Naive thymus-derived CD4-positive, alpha-beta T cell (primary cell): ENCODE measurements at regions of chr10 and their contacts with region 1.

Region 1: GRCh38 chr10:24642622-24643417 is 80.9 kb downstream of the ARHGAP21 start:
- DNase-seq: peak in 7 of 9 donors; percentile 24 to 64 (median 58)
- ATAC-seq: peak; percentile 93
- H3K4me3 ChIP-seq: no peak overlapping the region
- H3K4me3 Mint-ChIP-seq: no peak overlapping the region
- H3K27ac ChIP-seq: no peak overlapping the region
- H3K27ac Mint-ChIP-seq: no peak overlapping the region
- H3K4me1 ChIP-seq: no peaks in the 10 kb centered on the region
- H3K4me1 Mint-ChIP-seq: peaks cover 0 to 2% (median 0%) of the 10 kb centered on the region in 7 donors
- H3K27me3 ChIP-seq: no peaks in the 10 kb centered on the region
- H3K27me3 Mint-ChIP-seq: no peaks in the 10 kb centered on the region

Region 2: DNA sequence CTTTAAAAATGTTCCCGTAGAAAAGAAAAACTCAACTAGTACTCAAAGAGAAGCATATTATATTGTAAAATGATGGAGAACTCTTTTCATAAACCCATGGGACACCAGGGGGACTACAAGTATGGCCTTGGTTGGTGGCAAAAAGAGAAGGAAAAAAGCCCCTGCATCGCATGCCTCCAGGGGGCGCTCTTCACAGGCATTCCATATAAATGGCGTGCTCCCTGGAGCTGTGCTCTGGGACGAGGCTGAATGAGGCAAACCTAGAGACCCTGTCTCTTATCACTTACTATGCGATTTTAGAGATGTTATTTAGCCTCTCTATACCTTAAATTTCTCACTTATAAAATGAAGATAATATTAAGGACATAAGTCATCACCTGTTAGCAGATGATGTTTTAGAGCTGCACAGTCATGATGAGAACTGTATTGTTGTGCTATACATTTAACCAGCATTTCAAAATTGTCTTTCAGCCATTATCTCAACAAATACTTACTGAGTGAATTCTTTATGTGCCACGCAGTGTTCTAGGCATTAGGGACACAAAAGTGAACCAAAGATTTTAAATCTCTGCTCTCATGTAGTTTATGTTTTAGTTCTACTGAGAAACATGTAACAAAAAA is 24.9 kb before region 1 on chr10:
- CTCF ChIA-PET with region 1: interaction called, 12 read pairs
- POLR2A ChIA-PET with region 1: interaction called, 3 read pairs
- intact Hi-C with region 1: no loop called
- DNase-seq: peak; percentile 28 to 62 (median 46)
- ATAC-seq: peak; percentile 58
- H3K4me3 ChIP-seq: no peak overlapping the region
- H3K4me3 Mint-ChIP-seq: peak overlapping the region in 9 of 10 donors; percentile 34 to 75 (median 69)
- H3K27ac ChIP-seq: peak overlapping the region; percentile 5
- H3K27ac Mint-ChIP-seq: peak overlapping the region in 8 of 9 donors; percentile 65 to 97 (median 91)
- H3K4me1 ChIP-seq: peaks cover 0 to 16% of the 10 kb centered on the region in 2 donors
- H3K4me1 Mint-ChIP-seq: peaks cover 11 to 55% (median 42%) of the 10 kb centered on the region in 7 donors
- H3K27me3 ChIP-seq: no peaks in the 10 kb centered on the region
- H3K27me3 Mint-ChIP-seq: no peaks in the 10 kb centered on the region

Region 3: DNA sequence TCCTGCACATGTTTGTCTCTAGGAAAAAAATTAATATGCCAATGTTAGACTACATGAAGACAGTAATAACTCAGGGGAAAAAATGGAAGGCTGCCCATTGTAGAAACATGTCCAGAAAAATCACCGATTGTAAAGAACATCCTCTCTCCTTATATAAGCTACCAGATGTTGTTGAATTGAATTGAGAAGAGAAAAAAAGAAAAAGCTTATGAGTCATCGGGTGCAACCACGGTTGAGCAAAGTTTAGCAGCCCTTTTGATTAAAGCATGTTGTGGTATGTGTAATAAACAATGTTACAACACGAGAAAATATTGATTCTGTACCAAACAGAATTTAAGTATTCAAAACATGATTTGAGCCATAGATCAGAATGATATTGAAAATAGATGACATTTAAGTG is 183.2 kb after region 1 on chr10:
- CTCF ChIA-PET with region 1: no interaction called
- POLR2A ChIA-PET with region 1: no interaction called
- intact Hi-C with region 1: loop called in 1 of 2 experiments (anchors 10 kb)
- DNase-seq: no peak
- ATAC-seq: no peak
- H3K4me3 ChIP-seq: no peak overlapping the region
- H3K4me3 Mint-ChIP-seq: peak overlapping the region in 8 of 10 donors; percentile 11 to 62 (median 44)
- H3K27ac ChIP-seq: no peak overlapping the region
- H3K27ac Mint-ChIP-seq: peak overlapping the region in 6 of 9 donors; percentile 1 to 67 (median 36)
- H3K4me1 ChIP-seq: peaks cover 3 to 21% of the 10 kb centered on the region in 2 donors
- H3K4me1 Mint-ChIP-seq: peaks cover 14 to 54% (median 46%) of the 10 kb centered on the region in 7 donors
- H3K27me3 ChIP-seq: no peaks in the 10 kb centered on the region
- H3K27me3 Mint-ChIP-seq: no peaks in the 10 kb centered on the region

Region 4: GRCh38 chr10:24989867-24990266 is 347.0 kb after region 1 on chr10:
- CTCF ChIA-PET with region 1: interaction called, 10 read pairs
- POLR2A ChIA-PET with region 1: no interaction called
- intact Hi-C with region 1: loop called (anchors 1 kb)
- DNase-seq: peak in 1 of 9 donors; percentile 2
- ATAC-seq: no peak
- H3K4me3 ChIP-seq: no peak overlapping the region
- H3K4me3 Mint-ChIP-seq: no peak overlapping the region
- H3K27ac ChIP-seq: no peak overlapping the region
- H3K27ac Mint-ChIP-seq: no peak overlapping the region
- H3K4me1 ChIP-seq: no peaks in the 10 kb centered on the region
- H3K4me1 Mint-ChIP-seq: peaks cover 0 to 4% (median 0%) of the 10 kb centered on the region in 7 donors
- H3K27me3 ChIP-seq: no peaks in the 10 kb centered on the region
- H3K27me3 Mint-ChIP-seq: peaks cover 0 to 10% (median 0%) of the 10 kb centered on the region in 5 donors

Region 5: DNA sequence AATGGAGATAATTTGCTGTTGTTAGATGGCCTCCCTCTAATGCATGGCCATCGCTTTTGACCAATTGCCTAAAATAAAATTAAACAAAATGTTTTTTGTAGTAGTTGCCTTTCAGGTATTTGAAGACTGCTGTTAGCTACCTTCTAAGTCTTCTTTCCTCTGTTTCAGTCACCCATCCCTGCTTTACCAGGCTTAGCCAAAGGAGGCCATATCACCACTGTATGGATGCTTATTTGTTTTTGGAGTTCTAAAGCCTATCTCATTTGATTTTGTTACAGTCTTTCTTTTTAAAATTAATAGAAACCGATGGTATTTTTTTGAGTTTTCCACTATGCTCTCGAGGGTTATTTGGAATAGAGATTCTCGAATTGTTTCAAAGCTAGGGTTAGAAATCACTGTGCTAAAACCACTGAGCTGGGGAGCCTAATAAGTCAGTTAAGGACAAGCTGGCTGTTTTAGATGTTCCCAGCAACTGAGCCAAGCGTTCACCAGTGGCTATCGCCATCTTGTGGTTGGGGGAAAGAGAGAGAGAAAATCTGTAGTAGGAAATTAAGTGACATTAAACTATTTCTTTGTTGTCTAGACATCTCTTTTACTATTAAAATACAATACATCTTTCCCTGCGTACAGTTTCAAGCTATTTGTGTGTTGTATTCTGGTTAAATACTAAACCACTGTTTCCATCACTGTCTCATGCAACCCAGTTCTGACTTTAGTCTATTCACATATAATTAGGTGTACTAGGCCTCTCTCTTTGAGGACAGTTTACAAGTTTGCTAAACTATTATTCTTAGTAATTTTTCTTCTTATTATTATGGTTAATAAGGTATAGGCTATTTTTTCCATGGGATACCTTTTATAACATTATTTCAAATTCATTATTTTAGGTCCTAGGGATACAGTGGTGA is 584.2 kb after region 1 on chr10:
- CTCF ChIA-PET with region 1: no interaction called
- POLR2A ChIA-PET with region 1: no interaction called
- intact Hi-C with region 1: loop called in 1 of 2 experiments (anchors 2 kb)
- DNase-seq: peak in 4 of 9 donors; percentile 1 to 9 (median 2)
- ATAC-seq: no peak
- H3K4me3 ChIP-seq: no peak overlapping the region
- H3K4me3 Mint-ChIP-seq: no peak overlapping the region
- H3K27ac ChIP-seq: no peak overlapping the region
- H3K27ac Mint-ChIP-seq: no peak overlapping the region
- H3K4me1 ChIP-seq: no peaks in the 10 kb centered on the region
- H3K4me1 Mint-ChIP-seq: peaks cover 0 to 1% (median 0%) of the 10 kb centered on the region in 7 donors
- H3K27me3 ChIP-seq: no peaks in the 10 kb centered on the region
- H3K27me3 Mint-ChIP-seq: peaks cover 0 to 4% (median 0%) of the 10 kb centered on the region in 5 donors